ENCODE measurements at regions of chr3 and their contacts with region 1.

Region 1: DNA sequence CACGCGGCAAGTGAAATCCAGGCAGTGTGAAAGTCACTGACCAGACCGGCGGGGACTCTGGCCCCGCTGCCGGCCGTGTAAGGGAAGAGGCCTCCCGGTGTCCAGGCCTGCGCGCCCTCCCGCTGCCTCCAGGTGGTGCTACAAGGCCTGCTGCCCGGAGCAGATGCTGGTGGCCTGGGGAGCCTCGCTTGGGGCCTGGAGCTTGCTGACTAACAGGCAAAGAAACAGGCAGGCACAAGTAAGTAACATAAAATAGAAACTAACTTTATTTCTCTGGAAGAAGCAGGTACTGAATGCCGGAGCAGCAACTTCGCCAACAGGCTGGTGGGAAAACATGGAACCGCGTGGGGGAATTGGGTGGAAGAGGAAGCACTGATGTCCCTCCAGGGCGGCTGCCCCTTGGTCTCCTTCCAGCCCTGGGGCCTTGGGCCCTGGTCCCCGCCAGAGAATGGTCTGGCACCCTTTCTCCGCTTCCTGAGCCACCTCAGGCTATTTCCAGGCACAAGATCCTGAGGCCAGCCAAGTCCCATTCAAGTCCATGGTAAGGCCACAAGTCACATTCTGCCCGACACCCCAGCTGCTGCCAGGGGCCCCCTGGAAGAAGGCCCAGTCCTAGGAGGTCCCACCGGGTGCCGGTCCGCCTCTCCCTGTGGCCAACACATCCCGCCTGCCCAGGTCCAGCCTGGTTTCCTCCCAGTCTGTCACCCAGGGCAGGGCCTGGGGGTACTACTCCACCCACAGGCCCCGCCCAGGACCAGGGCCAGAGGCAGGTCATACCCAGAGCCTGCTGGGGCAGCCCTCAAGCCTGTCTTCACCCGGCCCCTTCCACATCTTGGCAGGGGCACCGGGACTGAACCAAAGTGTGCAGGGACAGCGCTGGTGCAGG is 45.0 kb downstream of the TNK2 start:
- DNase-seq: peak; percentile 89
- ATAC-seq: peak; percentile 99
- H3K4me3 ChIP-seq: no peak overlapping the region
- H3K27ac ChIP-seq: no peak overlapping the region
- H3K4me1 ChIP-seq: 0 out of 2 replicates have a peak, but pooled peaks cover 2% of the 10 kb centered on the region
- H3K27me3 ChIP-seq: no peaks in the 10 kb centered on the region
- CTCF ChIP-seq: peak; percentile 97
- POLR2A ChIP-seq: no peak
- RAD21 ChIP-seq: peak; percentile 91

Region 2: DNA sequence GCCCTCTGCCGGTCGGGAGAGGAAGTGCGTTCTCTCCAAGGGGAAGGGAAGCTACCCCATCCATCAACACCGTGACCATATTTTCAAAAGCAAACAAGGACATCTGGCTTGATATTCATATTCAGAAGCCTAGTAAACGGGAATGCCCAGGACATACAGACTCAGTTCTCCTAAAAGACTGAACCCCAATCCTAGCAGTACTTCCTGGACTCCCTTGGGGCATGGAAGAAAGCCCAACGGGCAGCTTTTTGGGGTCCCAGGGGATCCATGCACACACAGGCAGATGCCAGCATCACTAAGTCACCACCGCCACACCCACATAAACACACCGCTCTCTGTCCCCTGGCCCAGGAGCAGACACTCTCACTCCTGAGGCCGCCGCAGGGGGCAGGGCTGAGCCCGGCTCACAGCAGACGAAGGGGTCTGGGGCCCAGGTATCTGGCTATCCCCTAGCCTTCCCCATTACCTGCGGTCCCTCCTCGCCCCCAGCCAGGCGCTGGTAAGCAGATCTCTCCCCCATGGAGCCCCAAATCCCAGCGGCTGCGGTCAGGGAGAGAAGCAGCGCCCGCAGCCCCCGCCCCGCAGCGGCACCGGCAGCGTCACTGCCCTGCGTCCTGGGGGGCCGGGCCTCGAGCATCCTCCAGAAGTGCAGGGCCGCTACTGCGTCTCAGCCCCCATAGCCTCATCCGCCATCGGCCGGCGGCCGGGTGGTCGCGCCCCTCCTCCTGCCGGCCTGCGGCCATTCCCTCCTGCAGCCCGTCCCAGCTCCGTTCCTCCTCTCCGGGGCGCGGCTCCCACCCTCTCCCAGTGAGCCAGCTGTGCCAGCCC is 31.6 kb after region 1 on chr3:
- CTCF ChIA-PET with region 1: interaction called, 27 read pairs
- POLR2A ChIA-PET with region 1: no interaction called
- dilution Hi-C with region 1: no loop called
- in situ Hi-C with region 1: loop called (anchors 5 kb)
- intact Hi-C with region 1: loop called (anchors 1 kb)
- DNase-seq: peak; percentile 74
- ATAC-seq: peak; percentile 58
- H3K4me3 ChIP-seq: peak overlapping the region; percentile 57
- H3K27ac ChIP-seq: peak overlapping the region; percentile 61
- H3K4me1 ChIP-seq: peaks cover 31% of the 10 kb centered on the region
- H3K27me3 ChIP-seq: no peaks in the 10 kb centered on the region
- CTCF ChIP-seq: peak; percentile 94
- POLR2A ChIP-seq: no peak
- RAD21 ChIP-seq: peak; percentile 92

Region 3: DNA sequence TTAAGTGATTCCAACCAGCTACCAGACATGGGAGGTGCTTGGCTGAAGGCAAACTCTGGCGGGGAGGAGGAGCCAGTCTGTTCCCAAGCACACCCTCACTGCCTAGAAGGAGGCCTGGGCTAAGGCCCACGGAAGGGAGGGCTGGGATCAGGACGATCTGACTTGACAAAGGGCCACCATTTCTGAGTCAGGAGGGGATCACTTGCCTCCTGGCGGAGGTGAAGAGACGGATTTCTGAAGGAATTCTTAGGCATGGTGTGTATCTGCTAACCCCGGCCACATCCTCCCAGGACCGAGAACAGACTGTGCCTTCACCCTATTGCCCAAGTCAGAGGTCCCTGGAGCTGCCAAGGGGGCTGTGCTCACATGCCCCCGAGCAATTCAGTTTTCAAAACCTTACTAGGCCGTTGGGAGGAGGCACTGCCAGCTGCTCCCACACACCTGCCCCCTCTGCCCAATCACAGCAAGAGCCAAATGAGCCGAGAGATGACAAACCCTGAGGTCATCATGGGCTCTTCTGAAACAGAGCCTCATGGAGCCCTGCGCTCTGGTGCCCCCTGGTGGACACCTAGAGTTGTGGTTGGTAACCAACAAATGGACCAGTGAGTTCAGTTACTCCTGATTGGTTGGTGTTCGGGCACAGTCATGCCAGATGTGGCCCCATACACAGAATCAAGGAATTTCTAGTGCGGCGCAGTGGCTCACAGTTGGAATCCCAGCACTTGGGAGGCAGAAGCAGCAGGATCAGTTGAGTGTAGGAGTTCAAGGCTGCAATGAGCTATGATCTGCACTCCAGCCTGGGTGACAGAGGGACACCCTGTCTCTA is 51.5 kb after region 1 on chr3:
- CTCF ChIA-PET with region 1: interaction called, 9 read pairs
- POLR2A ChIA-PET with region 1: no interaction called
- dilution Hi-C with region 1: no loop called
- in situ Hi-C with region 1: no loop called
- intact Hi-C with region 1: loop called (anchors 1 kb)
- DNase-seq: peak; percentile 97
- ATAC-seq: peak; percentile 98
- H3K4me3 ChIP-seq: no peak overlapping the region
- H3K27ac ChIP-seq: no peak overlapping the region
- H3K4me1 ChIP-seq: peaks cover 4% of the 10 kb centered on the region; the same call in 1 of the 2 replicates
- H3K27me3 ChIP-seq: peaks cover 10% of the 10 kb centered on the region
- CTCF ChIP-seq: peak; percentile 99
- POLR2A ChIP-seq: 0 out of 2 replicates have a peak, but pooled peaks have one; percentile 37
- RAD21 ChIP-seq: peak; percentile 94

Region 4: DNA sequence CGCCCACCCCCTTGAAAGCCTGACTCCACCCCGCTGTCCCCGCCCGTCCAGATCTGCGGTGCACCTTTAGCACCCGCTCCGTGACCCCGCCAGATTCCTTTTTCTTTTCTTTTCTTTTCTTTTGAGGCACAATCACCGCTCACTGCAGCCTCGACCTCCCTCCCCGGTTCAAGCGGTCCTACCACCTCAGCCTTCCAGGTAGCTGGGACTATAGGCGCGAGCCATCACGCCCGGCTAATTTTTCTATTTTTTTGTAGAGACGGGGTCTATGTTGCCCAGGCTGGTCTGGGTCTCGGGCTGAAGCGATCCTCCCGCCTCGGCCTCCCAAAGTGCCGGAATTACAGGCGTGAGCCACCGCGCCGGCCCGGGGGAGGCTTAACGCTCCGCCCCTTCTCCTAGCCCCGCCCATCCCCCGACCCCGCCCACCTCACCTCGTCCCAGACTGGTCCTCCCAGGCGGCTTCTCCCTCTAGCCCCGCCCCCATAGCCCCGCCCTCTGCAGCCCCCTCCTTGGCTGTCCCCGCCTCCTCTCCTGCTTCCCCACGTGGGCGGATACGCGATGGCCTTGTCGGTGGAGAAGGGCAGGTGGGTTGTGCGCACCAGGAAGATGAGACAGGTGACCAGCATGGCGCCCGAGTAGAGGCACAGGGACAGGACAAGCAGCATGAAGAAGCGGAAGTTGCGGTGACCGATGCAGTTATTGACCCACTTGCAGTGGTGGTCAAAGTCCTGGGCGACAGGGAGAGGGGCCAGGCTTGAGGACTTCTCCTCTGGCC is 344.7 kb after region 1 on chr3:
- CTCF ChIA-PET with region 1: no interaction called
- POLR2A ChIA-PET with region 1: no interaction called
- dilution Hi-C with region 1: no loop called
- in situ Hi-C with region 1: no loop called
- intact Hi-C with region 1: loop called (anchors 5 kb)
- DNase-seq: no peak
- ATAC-seq: peak; percentile 68
- H3K4me3 ChIP-seq: peak overlapping the region; percentile 55
- H3K27ac ChIP-seq: no peak overlapping the region
- H3K4me1 ChIP-seq: peaks cover 3% of the 10 kb centered on the region; the same call in 1 of the 2 replicates
- H3K27me3 ChIP-seq: peaks cover 22% of the 10 kb centered on the region
- CTCF ChIP-seq: no peak
- POLR2A ChIP-seq: no peak
- RAD21 ChIP-seq: no peak